Activated naive CD4-positive, alpha-beta T cell treated with anti-CD3 and anti-CD28 coated beads, Interleukin-2, amount 10 ng/mL, durations not matched to agents 7 days and 5 days (primary cell): ENCODE measurements at regions of chr17 and their contacts with region 1.

Region 1: GRCh38 chr17:59331129-59331928 is at the start of gene YPEL2:
- DNase-seq: peak; percentile 94
- H3K4me3 Mint-ChIP-seq: peak within 1 kb of the TSS; percentile 90
- H3K27ac Mint-ChIP-seq: peak within 1 kb of the TSS; percentile 93
- H3K4me1 Mint-ChIP-seq: peaks cover 72% of the 10 kb centered on the region
- H3K27me3 Mint-ChIP-seq: peaks cover 12% of the 10 kb centered on the region

Region 2: DNA sequence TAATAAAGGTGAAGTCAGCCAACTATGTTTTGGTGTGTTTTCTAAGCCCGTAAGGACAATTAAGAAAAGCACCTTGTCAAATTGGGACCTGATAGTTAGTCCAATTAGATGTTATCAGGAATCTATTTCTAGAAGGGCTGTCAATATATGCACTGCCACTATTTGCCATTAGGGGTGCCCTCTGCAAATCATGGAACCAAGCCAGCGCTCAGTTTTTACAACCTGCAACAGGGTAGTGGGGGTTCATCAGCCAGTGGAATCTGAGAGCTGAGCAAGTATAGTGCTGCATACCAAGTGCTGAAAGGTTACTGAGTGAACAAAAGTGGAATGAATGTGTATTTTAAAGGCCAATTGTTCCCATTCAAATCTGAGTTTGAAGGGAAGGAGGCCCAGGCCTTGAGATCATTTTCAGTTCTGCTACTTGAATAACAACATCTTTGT is 165.4 kb before region 1 on chr17:
- CTCF ChIA-PET with region 1: no interaction called
- DNase-seq: peak; percentile 48
- H3K4me3 Mint-ChIP-seq: no peak overlapping the region
- H3K27ac Mint-ChIP-seq: peak overlapping the region; percentile 80
- H3K4me1 Mint-ChIP-seq: peaks cover 17% of the 10 kb centered on the region
- H3K27me3 Mint-ChIP-seq: no peaks in the 10 kb centered on the region

Region 3: DNA sequence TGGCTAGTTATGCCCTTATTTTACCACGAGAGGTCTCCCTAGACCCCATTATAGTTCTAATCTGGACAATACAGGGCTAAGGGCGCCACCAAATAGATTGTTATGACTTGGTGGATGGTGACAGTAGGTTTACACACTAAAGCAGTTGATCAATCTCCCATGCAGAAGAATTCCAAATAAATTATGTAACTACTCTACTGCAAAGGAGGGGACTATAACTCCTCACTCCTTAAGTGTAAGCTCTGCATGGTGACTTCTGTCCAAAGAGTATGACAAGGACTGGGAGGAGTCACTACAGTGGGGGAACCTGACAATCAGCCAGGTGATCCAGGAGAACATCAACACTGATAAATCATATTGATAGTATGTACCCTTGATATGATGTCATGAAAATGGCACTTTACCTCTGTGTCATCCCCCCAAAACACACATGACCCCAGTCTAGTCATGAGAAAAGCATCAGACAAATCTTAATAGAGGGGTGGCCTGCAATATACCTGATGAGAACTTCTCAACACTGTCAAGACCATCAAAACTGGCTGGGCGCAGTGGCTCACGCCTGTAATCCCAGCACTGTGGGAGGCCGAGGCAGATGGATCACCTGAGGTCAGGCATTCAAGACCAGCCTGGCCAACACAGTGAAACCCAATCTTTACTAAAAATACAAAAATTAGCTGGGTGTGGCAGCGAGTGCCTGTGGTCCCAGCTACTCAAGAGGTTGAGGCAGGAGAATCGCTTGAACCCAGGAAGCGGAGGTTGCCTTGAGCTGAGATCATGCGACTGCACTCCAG is 20.0 kb before region 1 on chr17:
- CTCF ChIA-PET with region 1: interaction called, 28 read pairs
- DNase-seq: peak; percentile 54
- H3K4me3 Mint-ChIP-seq: no peak overlapping the region
- H3K27ac Mint-ChIP-seq: no peak overlapping the region
- H3K4me1 Mint-ChIP-seq: peaks cover 7% of the 10 kb centered on the region
- H3K27me3 Mint-ChIP-seq: peaks cover 7% of the 10 kb centered on the region

Region 4: DNA sequence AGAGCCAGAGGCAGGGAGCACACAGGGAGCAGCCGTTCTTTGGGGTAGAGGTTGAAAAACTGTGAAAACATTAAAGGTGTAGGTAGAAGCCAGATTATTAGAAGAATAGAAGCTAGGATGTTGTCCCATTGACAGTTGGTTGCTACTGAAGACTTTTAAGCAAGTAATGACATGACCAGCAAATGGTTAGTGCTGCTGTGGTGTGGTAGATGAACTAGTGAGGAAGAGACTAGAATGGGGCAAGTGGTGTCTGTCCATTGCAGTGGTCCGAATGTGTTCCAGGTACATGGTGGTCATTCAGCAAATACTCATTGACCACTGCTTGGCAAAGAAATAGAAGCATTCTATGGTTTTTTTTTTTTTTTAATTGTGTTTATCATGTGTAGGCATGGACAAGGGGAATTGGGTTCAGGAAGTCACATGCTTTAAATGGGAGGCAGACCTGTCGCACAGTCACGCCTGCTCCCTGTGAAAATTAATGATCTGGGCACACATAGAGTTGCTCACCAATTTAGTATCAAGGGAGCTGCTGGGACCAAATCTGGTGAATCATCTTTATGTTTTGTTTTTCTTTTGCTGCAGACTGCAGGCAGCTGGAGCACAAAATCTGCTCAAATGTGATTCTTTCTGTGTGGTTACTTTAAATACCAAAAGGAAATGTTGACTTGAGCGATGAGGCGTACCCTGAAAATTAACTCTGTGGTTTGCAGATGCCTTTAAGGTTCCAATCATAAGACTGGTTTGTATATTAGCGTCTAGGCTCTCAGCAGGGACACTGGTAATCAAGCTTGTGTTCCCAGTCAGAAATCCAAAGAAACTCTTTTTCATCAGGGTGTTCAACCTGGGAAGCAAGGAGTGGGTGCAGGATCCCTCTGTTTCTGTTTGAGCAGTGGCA is 30.8 kb after region 1 on chr17:
- CTCF ChIA-PET with region 1: interaction called, 12 read pairs
- DNase-seq: peak; percentile 57
- H3K4me3 Mint-ChIP-seq: peak overlapping the region; percentile 74
- H3K27ac Mint-ChIP-seq: peak overlapping the region; percentile 95
- H3K4me1 Mint-ChIP-seq: peaks cover 85% of the 10 kb centered on the region
- H3K27me3 Mint-ChIP-seq: no peaks in the 10 kb centered on the region

Region 5: GRCh38 chr17:59427425-59427921 is 96.1 kb after region 1 on chr17:
- CTCF ChIA-PET with region 1: interaction called, 16 read pairs
- DNase-seq: peak; percentile 35
- H3K4me3 Mint-ChIP-seq: no peak overlapping the region
- H3K27ac Mint-ChIP-seq: no peak overlapping the region
- H3K4me1 Mint-ChIP-seq: peaks cover 10% of the 10 kb centered on the region
- H3K27me3 Mint-ChIP-seq: peaks cover 5% of the 10 kb centered on the region

Region 6: DNA sequence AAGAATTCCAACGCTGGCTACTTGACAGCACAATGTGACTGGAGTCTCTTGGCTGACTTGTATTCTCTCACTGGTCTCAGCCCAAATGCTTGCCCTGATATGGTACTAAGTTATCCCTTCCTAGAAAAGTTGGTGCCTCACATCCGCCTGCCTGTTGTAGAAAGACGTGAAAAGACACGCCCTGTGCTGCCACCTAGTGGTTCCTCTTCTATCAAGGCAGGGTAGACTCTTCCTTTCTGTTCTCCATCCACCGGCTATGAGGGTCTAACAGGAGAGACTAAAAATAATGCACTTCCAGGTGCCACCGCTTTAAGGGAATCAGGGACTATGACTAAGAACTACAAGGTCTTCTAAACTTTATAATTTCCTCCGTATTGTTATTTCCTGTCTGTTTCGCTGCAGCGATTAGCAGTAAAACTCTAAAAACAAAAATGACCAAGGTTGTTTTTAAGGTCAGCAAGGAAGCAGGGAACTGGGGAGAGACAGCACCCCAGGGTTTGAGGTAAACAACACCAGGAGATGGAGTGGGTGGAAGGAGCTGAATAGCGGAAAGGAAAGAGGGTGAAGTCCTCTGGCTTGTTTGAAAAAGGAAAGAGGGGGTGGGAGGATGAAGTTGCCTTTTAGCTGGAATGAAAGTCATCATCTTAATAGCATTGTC is 109.6 kb after region 1 on chr17:
- CTCF ChIA-PET with region 1: interaction called, 131 read pairs
- DNase-seq: peak; percentile 93
- H3K4me3 Mint-ChIP-seq: peak overlapping the region; percentile 24
- H3K27ac Mint-ChIP-seq: peak overlapping the region; percentile 33
- H3K4me1 Mint-ChIP-seq: peaks cover 51% of the 10 kb centered on the region
- H3K27me3 Mint-ChIP-seq: no peaks in the 10 kb centered on the region